K562 (cell line): ENCODE measurements at regions of chr1 and their contacts with region 1.

Region 1: GRCh38 chr1:30099587-30100523 is 623.5 kb downstream of the MATN1 start:
- DNase-seq: no peak
- ATAC-seq: no peak
- H3K4me3 ChIP-seq: no peak overlapping the region
- H3K27ac ChIP-seq: no peak overlapping the region
- H3K4me1 ChIP-seq: no peaks in the 10 kb centered on the region
- H3K27me3 ChIP-seq: peaks cover 0 to 26% of the 10 kb centered on the region in 2 experiments; a peak in 3 of 5 replicates
- CTCF ChIP-seq: no peak
- EP300 ChIP-seq: no peak
- POLR2A ChIP-seq: no peak
- RAD21 ChIP-seq: no peak

Region 2: DNA sequence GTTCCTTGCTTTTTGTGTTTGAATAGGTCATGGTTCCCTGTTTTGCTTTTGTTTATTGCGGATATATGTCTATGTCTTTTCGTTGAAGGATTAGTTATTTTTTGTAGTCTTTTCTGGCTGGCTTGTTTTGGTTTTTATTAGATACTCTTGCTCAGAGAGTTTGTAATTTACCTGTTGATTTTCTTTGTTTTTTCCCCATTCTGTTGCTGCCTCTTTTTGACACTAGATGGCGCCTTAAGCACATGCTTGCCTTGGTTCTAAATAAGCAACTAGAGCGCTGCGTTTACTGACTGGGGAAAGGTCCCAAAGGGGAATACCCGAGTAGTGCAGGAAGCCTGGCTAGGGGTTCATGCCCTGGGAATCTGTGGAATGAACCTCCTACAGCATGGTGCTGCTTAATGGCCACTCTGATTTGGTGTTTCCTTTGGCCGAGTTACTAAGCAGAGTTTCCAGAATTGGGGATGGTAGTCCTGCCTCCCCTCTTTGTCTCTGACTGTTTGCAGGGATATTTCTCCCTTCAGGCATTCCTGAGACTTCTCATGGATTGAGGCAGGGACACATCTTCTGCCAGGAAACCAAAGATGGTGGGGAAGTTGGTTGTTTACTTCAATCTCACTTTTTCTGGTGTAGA is 720.3 kb before region 1 on chr1:
- CTCF ChIA-PET with region 1: no interaction called
- POLR2A ChIA-PET with region 1: no interaction called
- in situ Hi-C with region 1: loop called (anchors 10 kb)
- intact Hi-C with region 1: no loop called
- DNase-seq: peak; percentile 60 to 70 (median 64)
- ATAC-seq: peak; percentile 71
- H3K4me3 ChIP-seq: no peak overlapping the region
- H3K27ac ChIP-seq: no peak overlapping the region
- H3K4me1 ChIP-seq: no peaks in the 10 kb centered on the region
- H3K27me3 ChIP-seq: peaks cover 0 to 13% of the 10 kb centered on the region in 2 experiments; a peak in 1 of 5 replicates
- CTCF ChIP-seq: peak; percentile 85 to 95 (median 88)
- EP300 ChIP-seq: 0 out of 2 replicates have a peak, but pooled peaks have one; percentile 27
- POLR2A ChIP-seq: no peak
- RAD21 ChIP-seq: peak; percentile 86 to 98

Region 3: GRCh38 chr1:30218438-30218837 is 118.6 kb after region 1 on chr1:
- CTCF ChIA-PET with region 1: no interaction called
- POLR2A ChIA-PET with region 1: no interaction called
- in situ Hi-C with region 1: no loop called
- intact Hi-C with region 1: no loop called
- DNase-seq: no peak
- ATAC-seq: no peak
- H3K4me3 ChIP-seq: no peak overlapping the region
- H3K27ac ChIP-seq: no peak overlapping the region
- H3K4me1 ChIP-seq: no peaks in the 10 kb centered on the region
- H3K27me3 ChIP-seq: peaks cover 7 to 37% of the 10 kb centered on the region in 2 experiments; a peak in 3 of 5 replicates
- CTCF ChIP-seq: no peak
- EP300 ChIP-seq: no peak
- POLR2A ChIP-seq: no peak
- RAD21 ChIP-seq: no peak

Region 4: DNA sequence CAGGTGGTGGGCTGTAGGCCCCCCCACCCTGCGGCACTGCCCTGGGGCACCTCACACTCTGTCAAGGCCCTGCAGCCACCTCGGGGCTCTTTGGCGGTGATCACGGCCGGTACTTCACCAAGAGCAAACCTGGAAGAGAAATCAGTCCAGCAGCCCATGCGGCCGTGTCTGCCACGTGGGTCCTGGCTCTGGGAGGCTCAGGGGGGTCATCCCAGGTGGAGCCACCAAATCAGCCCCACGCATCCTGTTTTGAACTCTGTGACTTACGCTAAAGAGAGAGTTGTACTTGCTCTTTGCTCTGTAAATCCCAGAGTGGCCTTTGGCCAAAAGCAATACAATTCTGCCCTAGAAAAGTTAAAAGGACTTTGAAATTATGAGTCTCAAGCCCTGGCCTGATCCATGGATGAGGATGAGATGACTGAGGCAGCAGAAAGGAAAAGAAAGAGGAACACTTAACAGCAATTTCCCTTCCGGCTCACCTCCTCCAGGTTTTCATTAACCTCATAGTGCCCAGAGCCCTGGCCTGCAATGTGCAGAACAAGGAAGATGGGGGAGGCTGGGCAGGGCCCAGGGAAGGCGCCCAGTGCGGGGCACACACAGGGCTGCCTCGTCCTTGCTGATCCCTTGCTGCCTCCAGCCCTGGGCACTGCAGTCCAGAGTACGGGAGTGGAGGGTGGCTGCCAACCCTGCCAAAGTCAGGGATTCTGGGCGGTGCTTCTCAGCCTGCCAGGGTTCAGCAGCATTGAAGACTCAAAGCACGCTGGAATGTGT is 286.5 kb after region 1 on chr1:
- CTCF ChIA-PET with region 1: no interaction called
- POLR2A ChIA-PET with region 1: no interaction called
- in situ Hi-C with region 1: no loop called
- intact Hi-C with region 1: no loop called
- DNase-seq: no peak
- ATAC-seq: no peak
- H3K4me3 ChIP-seq: no peak overlapping the region
- H3K27ac ChIP-seq: no peak overlapping the region
- H3K4me1 ChIP-seq: no peaks in the 10 kb centered on the region
- H3K27me3 ChIP-seq: peaks cover 3 to 39% of the 10 kb centered on the region in 2 experiments; a peak in 3 of 5 replicates
- CTCF ChIP-seq: no peak
- EP300 ChIP-seq: no peak
- POLR2A ChIP-seq: no peak
- RAD21 ChIP-seq: no peak

Region 5: GRCh38 chr1:30489737-30490389 is 390.0 kb after region 1 on chr1:
- CTCF ChIA-PET with region 1: no interaction called
- POLR2A ChIA-PET with region 1: no interaction called
- in situ Hi-C with region 1: loop called (anchors 5 kb)
- intact Hi-C with region 1: no loop called
- DNase-seq: no peak
- ATAC-seq: no peak
- H3K4me3 ChIP-seq: no peak overlapping the region
- H3K27ac ChIP-seq: no peak overlapping the region
- H3K4me1 ChIP-seq: no peaks in the 10 kb centered on the region
- H3K27me3 ChIP-seq: peaks cover 0 to 4% of the 10 kb centered on the region in 2 experiments; a peak in 2 of 5 replicates
- CTCF ChIP-seq: no peak
- EP300 ChIP-seq: no peak
- POLR2A ChIP-seq: no peak
- RAD21 ChIP-seq: no peak